ENCODE measurements at regions of chr16 and their contacts with region 1.

Region 1: DNA sequence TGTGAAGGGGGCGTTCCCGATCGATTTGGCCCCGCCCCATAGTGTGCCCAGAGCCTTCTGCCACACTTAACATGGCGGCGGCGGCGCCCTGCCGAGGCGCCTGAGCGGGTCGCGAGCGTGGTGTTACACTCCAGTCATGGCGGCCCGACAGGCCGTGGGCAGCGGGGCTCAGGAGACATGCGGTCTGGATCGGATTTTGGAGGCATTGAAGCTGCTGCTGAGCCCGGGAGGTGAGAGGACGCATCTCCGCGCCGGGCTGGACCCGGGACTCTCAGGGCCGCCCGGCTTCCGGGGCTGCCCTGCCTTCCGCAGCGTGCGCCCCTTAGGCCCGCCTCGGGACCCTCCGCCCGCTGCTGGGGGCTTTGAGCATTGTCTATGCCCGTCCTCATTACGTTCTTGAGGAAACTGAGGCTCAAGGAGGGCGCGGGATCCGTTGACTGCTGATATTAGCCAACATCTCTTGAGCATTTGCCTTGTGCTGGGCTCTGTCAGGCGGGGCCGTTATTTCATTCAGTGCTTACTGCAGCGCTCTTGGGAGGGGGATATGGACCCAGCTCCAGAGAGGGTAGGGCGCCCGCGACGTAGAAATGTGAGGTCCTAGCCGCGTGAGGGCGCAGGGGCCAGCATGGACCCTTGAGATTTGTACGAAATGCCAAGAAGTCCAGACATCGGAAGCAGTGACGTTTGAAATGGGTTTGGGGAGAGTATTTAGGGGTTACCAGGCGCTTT is at the start of gene TANGO6:
- DNase-seq: peak; percentile 73 to 91 (median 86)
- H3K4me3 ChIP-seq: peak within 1 kb of the TSS; percentile 62 to 98 (median 90)
- H3K27ac ChIP-seq: peak within 1 kb of the TSS; percentile 45 to 97 (median 89)
- H3K27me3 ChIP-seq: no peaks in the 10 kb centered on the region
- CTCF ChIP-seq: peak in 35 of 56 donors; percentile 4 to 57 (median 23)
- total RNA-seq, gene TANGO6: 22.2 to 62.8 (median 36.2) TPM

Region 2: GRCh38 chr16:68538880-68539701 is 304.6 kb before region 1 on chr16 and contains the start of gene ZFP90:
- intact Hi-C with region 1: loop called in 1 of 2 experiments (anchors 10 kb)
- DNase-seq: peak; percentile 74 to 94 (median 84)
- H3K4me3 ChIP-seq: peak within 1 kb of the TSS; percentile 61 to 100 (median 98)
- H3K27ac ChIP-seq: peak within 1 kb of the TSS in 58 of 59 donors; percentile 19 to 97 (median 85)
- H3K27me3 ChIP-seq: no peaks in the 10 kb centered on the region
- CTCF ChIP-seq: peak in 42 of 56 donors; percentile 2 to 60 (median 32)
- total RNA-seq, gene ZFP90: 43.3 to 78.1 (median 60.5) TPM

Region 3: GRCh38 chr16:68935008-68935407 is 91.4 kb after region 1 on chr16:
- intact Hi-C with region 1: no loop called
- DNase-seq: no peak
- H3K4me3 ChIP-seq: no peak overlapping the region
- H3K27ac ChIP-seq: no peak overlapping the region
- H3K27me3 ChIP-seq: no peaks in the 10 kb centered on the region
- CTCF ChIP-seq: no peak

Region 4: DNA sequence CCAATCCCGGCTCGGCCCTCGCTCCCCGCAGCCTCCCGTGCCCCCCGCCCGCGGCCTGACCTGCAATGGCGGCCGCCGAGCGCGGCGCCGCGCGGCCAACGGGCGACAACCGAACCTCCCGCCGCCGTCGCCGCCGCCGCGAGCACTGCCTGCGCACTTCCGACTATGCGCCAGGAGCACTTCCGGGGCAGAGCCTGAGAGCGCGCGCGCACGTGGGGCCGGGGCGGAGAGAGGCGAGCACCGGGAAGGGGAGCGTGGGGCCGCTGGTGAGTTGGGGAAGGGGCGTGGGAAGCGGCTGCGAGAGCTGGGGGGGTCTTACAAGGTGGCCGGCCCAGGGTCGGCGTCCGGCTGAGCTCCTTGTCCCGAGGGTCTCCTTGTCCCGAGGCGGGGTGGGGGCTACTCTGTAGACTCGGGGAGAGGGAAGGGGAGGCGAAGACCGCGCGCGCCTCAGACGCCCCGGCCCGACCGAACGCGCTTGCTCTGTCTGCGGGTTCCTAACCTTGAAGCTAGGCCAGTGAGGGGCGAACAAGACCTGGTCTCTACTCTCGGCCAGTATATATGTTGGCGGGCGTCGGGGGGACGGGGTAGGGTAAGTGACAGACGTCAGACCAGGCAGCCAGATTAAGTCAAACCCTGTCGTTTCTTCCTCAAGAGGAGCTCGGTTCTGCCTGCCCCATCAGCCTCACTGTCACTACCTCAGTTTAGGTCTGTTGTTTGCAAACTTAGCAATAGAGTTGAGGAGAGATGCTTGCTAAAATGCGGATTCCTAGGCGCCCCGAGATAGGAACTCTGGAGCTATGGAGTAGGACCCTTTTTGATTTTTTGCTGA is 289.0 kb after region 1 on chr16 and contains the starts of genes CHTF8 and UTP4:
- intact Hi-C with region 1: loop called in 1 of 2 experiments (anchors 5 kb)
- DNase-seq: peak; percentile 69 to 93 (median 82)
- H3K4me3 ChIP-seq: peak within 1 kb of the TSS; percentile 60 to 99 (median 90)
- H3K27ac ChIP-seq: peak within 1 kb of the TSS in 56 of 59 donors; percentile 30 to 93 (median 86)
- H3K27me3 ChIP-seq: no peaks in the 10 kb centered on the region
- CTCF ChIP-seq: peak in 2 of 56 donors; percentile 10 to 15
- total RNA-seq, gene CHTF8: 40.8 to 90.1 (median 64.5) TPM
- total RNA-seq, gene UTP4: 24.8 to 57.1 (median 40.2) TPM

Region 5: DNA sequence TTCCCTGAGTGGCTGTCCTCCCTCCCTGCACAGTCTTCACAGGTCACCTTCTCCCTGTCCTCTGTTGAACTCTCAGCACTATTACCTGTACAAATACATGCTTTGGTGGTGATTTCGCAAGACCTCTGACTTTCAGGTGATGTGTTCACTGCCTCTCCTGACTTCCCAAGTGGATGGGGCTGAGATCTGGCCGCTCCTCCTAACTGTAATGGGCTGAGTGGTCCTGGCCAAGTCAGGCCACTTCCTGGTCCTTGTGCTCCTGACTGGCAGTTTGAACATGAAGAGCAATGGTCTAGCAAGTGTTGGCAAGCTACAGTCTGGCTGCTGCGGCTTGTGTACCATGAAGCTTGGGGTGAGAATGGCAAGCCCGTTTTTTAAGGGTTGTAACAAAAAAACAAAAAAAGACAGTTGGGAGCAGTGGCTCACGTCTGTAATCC is 519.7 kb after region 1 on chr16:
- intact Hi-C with region 1: no loop called
- DNase-seq: no peak
- H3K4me3 ChIP-seq: no peak overlapping the region
- H3K27ac ChIP-seq: no peak overlapping the region
- H3K27me3 ChIP-seq: no peaks in the 10 kb centered on the region
- CTCF ChIP-seq: no peak